ENCODE measurements at regions of chr2 and their contacts with region 1.

Region 1: GRCh38 chr2:26495705-26496297 is 17.9 kb upstream of the OTOF start:
- DNase-seq: peak; percentile 78
- H3K4me3 ChIP-seq: no peak overlapping the region
- H3K27ac ChIP-seq: no peak overlapping the region
- H3K4me1 ChIP-seq: peaks cover 42% of the 10 kb centered on the region
- H3K27me3 ChIP-seq: no peaks in the 10 kb centered on the region
- CTCF ChIP-seq: no peak
- POLR2A ChIP-seq: no peak

Region 2: DNA sequence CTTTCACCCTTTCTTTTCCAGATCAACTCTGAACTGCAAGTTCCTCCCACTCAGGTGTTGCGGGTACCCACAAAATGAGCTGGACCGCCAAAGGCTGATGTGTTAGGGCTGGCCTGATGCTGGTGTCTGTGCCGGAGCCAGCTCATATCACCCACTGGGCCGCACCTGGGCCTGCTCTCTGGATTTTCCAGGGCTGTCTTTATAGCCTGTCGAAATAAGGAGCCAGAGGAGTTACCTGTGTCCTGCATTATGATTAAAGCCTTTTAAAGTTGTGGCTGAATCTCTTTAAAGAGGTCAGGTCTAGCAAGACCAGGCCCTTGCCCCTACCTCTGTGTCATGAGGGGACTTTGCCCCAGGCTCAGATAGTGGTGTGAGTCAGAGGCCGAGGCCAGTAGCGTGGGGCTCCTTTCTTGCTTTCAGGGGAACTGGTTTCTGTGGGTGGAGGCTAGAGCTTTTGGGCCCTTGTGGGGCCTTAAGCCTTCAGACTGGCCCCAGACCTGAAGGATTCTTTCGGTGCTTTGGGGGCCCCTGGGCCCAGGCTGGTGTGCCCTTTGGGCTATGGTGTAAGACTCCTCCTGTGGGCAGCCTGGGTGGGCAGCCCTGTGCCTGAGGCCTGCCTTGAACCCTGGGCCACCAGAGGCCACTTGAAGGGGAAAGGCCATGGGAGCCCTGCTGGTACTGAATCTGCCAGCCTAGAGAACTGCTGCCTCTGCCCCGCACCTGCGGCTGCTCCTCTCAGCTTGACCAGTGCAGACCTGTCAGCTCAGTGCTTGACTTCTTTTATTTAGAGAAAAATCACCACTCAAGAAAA is 39.2 kb before region 1 on chr2:
- CTCF ChIA-PET with region 1: no interaction called
- POLR2A ChIA-PET with region 1: no interaction called
- dilution Hi-C with region 1: no loop called
- intact Hi-C with region 1: loop called (anchors 2 kb)
- DNase-seq: no peak
- H3K4me3 ChIP-seq: no peak overlapping the region
- H3K27ac ChIP-seq: no peak overlapping the region
- H3K4me1 ChIP-seq: peaks cover 16% of the 10 kb centered on the region
- H3K27me3 ChIP-seq: no peaks in the 10 kb centered on the region
- CTCF ChIP-seq: no peak
- POLR2A ChIP-seq: no peak

Region 3: DNA sequence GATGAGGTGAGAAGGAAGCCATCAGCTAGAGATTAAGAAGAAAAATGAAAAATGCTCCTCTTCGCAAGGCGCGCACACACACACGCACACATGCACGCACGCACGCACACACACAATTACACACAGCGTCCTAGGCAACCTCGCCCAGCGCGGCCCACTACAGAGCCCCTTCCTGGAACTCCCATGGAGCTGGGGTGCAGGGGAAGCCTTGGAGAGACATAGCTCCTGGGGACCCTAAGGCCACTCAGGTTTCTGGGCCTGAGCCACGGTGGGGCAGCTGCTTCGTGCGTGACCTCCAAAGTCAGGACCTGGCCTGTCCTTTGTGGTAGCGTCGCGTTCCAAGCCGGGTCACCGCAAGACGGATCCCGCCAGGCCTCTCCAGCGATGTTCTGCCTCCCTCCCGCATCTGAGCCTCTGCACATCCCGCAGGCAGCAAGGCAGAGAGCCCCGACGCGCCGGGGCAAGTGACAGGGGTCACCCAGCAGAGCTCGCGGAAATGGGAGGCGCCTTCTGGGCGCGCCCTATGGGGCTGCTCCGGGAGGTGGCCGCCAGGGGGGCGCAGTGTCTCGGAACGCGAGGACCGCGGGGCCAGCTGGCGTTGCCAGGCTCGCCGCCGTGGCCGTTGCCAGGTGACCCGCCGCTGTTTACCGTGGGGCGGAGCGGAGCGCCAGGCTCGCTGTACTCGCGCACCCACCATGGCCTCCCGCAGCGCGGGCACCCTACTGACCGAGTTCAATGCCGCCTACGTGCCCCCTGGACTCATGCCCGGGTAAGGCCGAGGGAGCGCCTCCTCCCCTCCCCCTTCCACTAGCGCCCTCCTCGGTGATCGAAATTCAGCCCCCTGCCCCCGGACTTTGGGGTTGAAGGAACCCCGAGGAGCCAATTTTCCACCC is 66.4 kb after region 1 on chr2:
- CTCF ChIA-PET with region 1: no interaction called
- POLR2A ChIA-PET with region 1: no interaction called
- dilution Hi-C with region 1: no loop called
- intact Hi-C with region 1: loop called (anchors 2 kb)
- DNase-seq: peak; percentile 55
- H3K4me3 ChIP-seq: peak overlapping the region in 2 of 3 experiments; percentile 14 to 24
- H3K27ac ChIP-seq: no peak overlapping the region
- H3K4me1 ChIP-seq: peaks cover 7% of the 10 kb centered on the region
- H3K27me3 ChIP-seq: peaks cover 36 to 49% of the 10 kb centered on the region in 2 experiments
- CTCF ChIP-seq: peak; percentile 41 to 61
- POLR2A ChIP-seq: no peak

Region 4: DNA sequence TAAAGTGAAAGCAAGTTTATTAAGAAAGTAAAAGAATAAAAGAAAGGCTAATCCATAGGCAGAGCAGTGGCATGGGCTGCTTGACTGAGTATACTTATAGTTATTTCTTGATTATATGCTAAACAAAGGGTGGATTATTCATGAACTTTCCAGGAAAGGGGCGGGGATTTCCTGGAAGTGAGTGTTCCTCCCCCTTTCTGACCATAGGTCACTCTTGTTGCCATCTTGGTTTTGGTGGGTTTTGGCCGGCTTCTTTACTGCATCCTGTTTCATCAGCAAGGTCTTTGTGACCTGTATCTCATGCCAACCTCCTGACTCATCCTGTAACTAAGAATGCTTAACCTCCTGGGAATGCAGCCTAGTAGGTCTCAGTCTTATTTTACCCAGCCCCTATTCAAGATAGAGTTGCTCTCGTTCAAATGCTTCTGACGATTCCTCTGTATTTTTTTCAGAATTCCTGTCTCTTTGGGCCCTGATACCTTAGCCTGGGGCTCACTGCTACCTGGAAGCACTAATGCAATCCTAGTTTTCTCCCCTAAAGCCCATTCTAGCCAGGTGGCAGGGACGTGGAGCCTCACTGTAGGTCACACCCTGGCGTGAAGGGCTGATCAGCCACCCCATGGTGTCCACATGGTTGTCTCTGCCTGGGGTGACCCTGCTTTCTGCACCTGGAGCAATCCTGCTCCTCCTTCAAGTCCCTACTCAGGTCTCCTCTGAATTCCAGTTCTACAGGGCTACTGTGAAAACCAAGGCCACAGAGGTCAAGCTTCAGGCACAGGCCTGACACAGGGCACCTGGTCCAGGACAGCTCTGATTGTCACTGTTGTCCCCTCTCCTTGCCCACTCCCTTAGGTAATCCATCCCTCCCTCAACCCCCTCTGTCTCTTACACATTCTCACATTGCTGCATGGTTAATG is 262.3 kb after region 1 on chr2:
- CTCF ChIA-PET with region 1: no interaction called
- POLR2A ChIA-PET with region 1: no interaction called
- dilution Hi-C with region 1: no loop called
- intact Hi-C with region 1: loop called (anchors 5 kb)
- DNase-seq: peak; percentile 96
- H3K4me3 ChIP-seq: no peak overlapping the region
- H3K27ac ChIP-seq: peak overlapping the region; percentile 98
- H3K4me1 ChIP-seq: peaks cover 23% of the 10 kb centered on the region
- H3K27me3 ChIP-seq: no peaks in the 10 kb centered on the region
- CTCF ChIP-seq: no peak
- POLR2A ChIP-seq: peak; percentile 61

Measured in endothelial cell of umbilical vein (primary cell).